HepG2 (cell line): ENCODE measurements at regions of chr3 and their contacts with region 1.

Region 1: DNA sequence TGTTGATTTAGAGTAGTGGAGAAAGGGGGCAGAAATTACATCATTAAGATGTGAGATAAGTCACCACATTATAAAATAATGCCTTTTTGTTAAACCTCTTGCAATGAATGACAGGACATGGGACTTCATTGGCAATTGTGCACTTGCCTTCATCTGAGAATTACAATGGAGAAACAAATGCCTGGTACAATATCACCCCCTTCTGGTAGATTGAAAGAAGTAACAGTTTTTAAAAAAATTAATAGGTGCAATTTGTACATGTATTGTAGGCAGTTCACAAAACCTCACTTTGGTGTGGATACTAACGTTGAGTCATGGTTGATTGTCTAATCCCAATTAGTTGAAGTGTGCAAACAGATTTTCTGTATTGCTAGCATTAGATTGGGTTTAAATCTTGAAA is 4.6 kb upstream of the P2RY14 start:
- DNase-seq: peak; percentile 60
- ATAC-seq: peak; percentile 74
- H3K4me3 ChIP-seq: no peak overlapping the region
- H3K27ac ChIP-seq: no peak overlapping the region
- H3K4me1 ChIP-seq: peaks cover 23% of the 10 kb centered on the region
- H3K27me3 ChIP-seq: no peaks in the 10 kb centered on the region
- CTCF ChIP-seq: peak; percentile 76
- EP300 ChIP-seq: no peak
- POLR2A ChIP-seq: no peak
- RAD21 ChIP-seq: peak; percentile 85

Region 2: GRCh38 chr3:151067158-151067557 is 215.8 kb before region 1 on chr3:
- CTCF ChIA-PET with region 1: no interaction called
- POLR2A ChIA-PET with region 1: no interaction called
- in situ Hi-C with region 1: no loop called
- intact Hi-C with region 1: loop called (anchors 5 kb)
- DNase-seq: peak; percentile 42
- ATAC-seq: peak; percentile 87
- H3K4me3 ChIP-seq: no peak overlapping the region
- H3K27ac ChIP-seq: no peak overlapping the region
- H3K4me1 ChIP-seq: no peaks in the 10 kb centered on the region
- H3K27me3 ChIP-seq: no peaks in the 10 kb centered on the region
- CTCF ChIP-seq: peak; percentile 72
- EP300 ChIP-seq: no peak
- POLR2A ChIP-seq: no peak
- RAD21 ChIP-seq: no peak

Region 3: DNA sequence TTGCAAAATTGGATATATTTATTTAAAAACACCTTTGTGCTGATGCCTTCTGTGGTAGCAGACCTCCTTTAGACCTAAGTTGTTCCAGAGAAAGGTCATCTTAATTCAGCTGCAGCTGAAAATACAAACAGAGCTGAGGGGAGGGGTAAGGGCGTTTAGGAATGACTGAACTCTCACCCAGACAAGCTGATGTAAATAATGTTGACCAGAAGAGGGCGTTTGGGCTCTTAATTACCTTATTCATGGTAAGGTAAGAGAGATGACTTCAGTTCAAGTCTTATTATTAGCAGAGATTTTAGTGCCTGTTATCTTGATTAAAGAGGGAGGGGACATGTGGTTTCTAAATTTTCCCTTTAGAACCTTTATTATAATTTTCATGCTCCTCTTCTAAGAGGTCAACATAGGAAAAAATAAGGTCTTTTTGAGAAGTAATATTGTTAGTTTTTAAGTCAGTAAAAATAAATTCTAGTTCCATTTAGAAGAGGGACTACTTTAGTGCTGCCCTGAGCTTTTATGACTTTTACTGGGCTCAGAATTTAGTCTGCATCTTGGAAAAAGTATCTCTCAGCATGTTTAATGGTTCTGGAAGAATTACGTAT is 126.2 kb before region 1 on chr3:
- CTCF ChIA-PET with region 1: interaction called, 13 read pairs
- POLR2A ChIA-PET with region 1: no interaction called
- in situ Hi-C with region 1: no loop called
- intact Hi-C with region 1: no loop called
- DNase-seq: peak; percentile 67
- ATAC-seq: peak; percentile 88
- H3K4me3 ChIP-seq: no peak overlapping the region
- H3K27ac ChIP-seq: no peak overlapping the region
- H3K4me1 ChIP-seq: peaks cover 8% of the 10 kb centered on the region
- H3K27me3 ChIP-seq: 0 out of 5 replicates have a peak, but pooled peaks cover 0 to 1% of the 10 kb centered on the region in 2 experiments
- CTCF ChIP-seq: peak; percentile 62
- EP300 ChIP-seq: no peak
- POLR2A ChIP-seq: no peak
- RAD21 ChIP-seq: no peak

Region 4: GRCh38 chr3:151227807-151228665 is 54.9 kb before region 1 on chr3:
- CTCF ChIA-PET with region 1: interaction called, 18 read pairs
- POLR2A ChIA-PET with region 1: no interaction called
- in situ Hi-C with region 1: loop called (anchors 5 kb)
- intact Hi-C with region 1: loop called (anchors 1 kb)
- DNase-seq: peak; percentile 67
- ATAC-seq: peak; percentile 94
- H3K4me3 ChIP-seq: no peak overlapping the region
- H3K27ac ChIP-seq: no peak overlapping the region
- H3K4me1 ChIP-seq: peaks cover 34% of the 10 kb centered on the region
- H3K27me3 ChIP-seq: no peaks in the 10 kb centered on the region; a peak in 1 of 5 replicates
- CTCF ChIP-seq: peak; percentile 92
- EP300 ChIP-seq: no peak
- POLR2A ChIP-seq: no peak
- RAD21 ChIP-seq: peak; percentile 93